Ascending aorta (tissue), 2 donors: ENCODE measurements at regions of chr12 and their contacts with region 1.

Region 1: GRCh38 chr12:65602610-65603295 is 221.5 kb upstream of the HMGA2 start:
- DNase-seq: peak; percentile 10 to 82
- H3K4me3 ChIP-seq: peak overlapping the region in 1 of 2 donors; percentile 47
- H3K27ac ChIP-seq: peak overlapping the region; percentile 35 to 47
- H3K4me1 ChIP-seq: peaks cover 3 to 4% of the 10 kb centered on the region in 2 donors
- H3K27me3 ChIP-seq: no peaks in the 10 kb centered on the region
- CTCF ChIP-seq: peak; percentile 71 to 77 (median 76)

Region 2: GRCh38 chr12:66087365-66087943 is 484.7 kb after region 1 on chr12:
- intact Hi-C with region 1: loop called (anchors 1 kb)
- DNase-seq: peak in 1 of 2 donors; percentile 79
- H3K4me3 ChIP-seq: no peak overlapping the region
- H3K27ac ChIP-seq: no peak overlapping the region
- H3K4me1 ChIP-seq: peaks cover 0 to 5% of the 10 kb centered on the region in 2 donors
- H3K27me3 ChIP-seq: no peaks in the 10 kb centered on the region
- CTCF ChIP-seq: peak; percentile 51 to 79 (median 63)

Region 3: GRCh38 chr12:66107451-66107915 is 504.7 kb after region 1 on chr12:
- intact Hi-C with region 1: loop called (anchors 2 kb)
- DNase-seq: peak in 1 of 2 donors; percentile 83
- H3K4me3 ChIP-seq: no peak overlapping the region
- H3K27ac ChIP-seq: no peak overlapping the region
- H3K4me1 ChIP-seq: no peaks in the 10 kb centered on the region
- H3K27me3 ChIP-seq: no peaks in the 10 kb centered on the region
- CTCF ChIP-seq: peak; percentile 72 to 85 (median 79)